Vagina (tissue), 2 donors: ENCODE measurements at regions of chr11 and their contacts with region 1.

Region 1: DNA sequence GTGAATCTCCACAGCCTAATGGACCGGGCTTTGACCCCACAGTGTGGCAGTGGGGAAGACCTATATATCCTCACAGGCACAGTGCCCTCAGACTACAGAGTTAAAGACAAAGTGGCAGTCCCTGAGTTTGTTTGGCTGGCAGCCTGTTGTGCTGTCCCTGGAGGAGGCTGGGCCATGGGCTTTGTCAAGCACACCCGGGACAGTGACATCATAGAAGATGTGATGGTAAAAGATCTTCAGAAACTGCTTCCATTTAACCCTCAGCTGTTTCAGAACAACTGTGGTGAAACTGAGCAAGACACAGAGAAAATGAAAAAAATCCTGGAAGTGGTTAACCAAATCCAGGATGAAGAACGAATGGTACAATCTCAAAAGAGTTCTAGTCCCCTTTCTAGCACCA is 39.0 kb downstream of the ENDOD1 start:
- DNase-seq: no peak
- H3K4me3 ChIP-seq: no peak overlapping the region
- H3K27ac ChIP-seq: no peak overlapping the region
- H3K4me1 ChIP-seq: peaks cover 6% of the 10 kb centered on the region
- H3K27me3 ChIP-seq: no peaks in the 10 kb centered on the region
- CTCF ChIP-seq: no peak
- POLR2A ChIP-seq: no peak

Region 2: DNA sequence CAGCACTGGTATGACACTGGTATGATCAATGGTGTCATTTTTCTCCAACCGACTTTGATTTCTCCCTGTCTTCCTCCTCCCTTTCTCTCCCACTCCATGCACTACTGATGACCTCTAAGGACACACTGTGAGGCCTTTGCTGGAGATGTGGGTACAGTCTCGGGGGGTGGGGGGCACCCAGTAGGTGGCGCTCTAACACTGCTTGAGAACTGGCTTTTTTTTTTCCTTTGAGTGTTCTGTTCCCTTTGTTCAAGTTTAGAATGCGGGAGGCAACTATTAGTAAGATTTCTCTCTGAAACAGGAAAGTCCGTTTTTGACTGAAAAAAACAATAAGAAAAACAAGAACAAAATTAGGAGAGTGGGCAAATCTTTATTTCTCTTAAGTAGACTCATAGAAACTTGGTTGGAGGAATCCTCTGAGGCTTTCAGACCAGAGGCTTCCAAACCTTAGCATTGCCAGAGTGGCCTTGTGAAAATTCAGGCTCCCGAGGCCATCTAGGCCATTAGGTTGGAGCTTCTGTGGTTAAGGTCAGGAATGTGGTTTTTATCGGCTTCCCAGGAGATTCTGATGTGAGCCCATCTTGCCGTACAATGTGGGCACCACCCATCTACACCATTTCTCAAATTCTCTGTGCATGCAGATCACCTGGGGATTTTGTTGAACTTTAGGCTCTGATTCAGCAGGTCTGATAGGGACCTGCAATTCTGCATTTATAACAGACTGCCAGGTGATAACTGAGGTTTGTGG is 956.7 kb before region 1 on chr11:
- intact Hi-C with region 1: loop called (anchors 5 kb)
- DNase-seq: peak in 1 of 2 donors; percentile 60
- H3K4me3 ChIP-seq: no peak overlapping the region
- H3K27ac ChIP-seq: no peak overlapping the region
- H3K4me1 ChIP-seq: peaks cover 9% of the 10 kb centered on the region
- H3K27me3 ChIP-seq: no peaks in the 10 kb centered on the region
- CTCF ChIP-seq: peak in 1 of 3 experiments; percentile 20
- POLR2A ChIP-seq: no peak